HEK293T (cell line): ENCODE measurements at regions of chr1 and their contacts with region 1.

Region 1: DNA sequence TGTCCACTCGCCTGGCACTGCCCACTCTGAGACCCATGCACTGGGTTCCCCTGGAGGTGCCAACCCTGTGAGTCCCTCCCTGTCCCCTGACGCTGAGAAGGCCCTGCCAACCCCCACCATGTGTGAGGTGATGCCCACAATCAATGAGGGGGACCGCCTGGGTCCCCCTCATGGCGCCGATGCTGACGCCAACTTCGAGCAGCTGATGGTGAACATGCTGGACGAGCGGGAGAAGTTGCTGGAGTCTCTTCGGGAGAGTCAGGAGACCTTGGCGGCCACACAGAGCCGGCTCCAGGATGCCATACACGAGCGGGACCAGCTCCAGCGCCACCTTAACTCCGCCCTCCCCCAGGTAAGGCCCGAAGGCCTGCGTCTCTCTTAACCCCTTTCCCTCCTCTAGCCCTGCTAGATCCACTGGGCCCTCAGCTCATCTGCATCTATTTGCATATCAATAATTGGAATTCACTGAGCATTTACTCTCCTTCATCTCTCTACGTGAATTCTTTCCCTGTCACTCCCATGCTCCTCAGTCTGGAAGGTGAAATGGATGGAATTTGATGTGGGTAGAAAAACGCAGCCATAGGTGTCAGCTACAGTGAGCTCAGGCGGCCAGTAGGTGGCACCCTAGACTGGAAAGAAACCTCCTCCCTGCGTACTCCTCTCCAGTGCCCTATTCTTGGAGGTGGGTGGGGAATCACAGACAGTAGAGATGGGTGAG is 12.8 kb downstream of the PPFIA4 start:
- DNase-seq: peak; percentile 84

Region 2: GRCh38 chr1:202938287-202938925 is 100.6 kb before region 1 on chr1:
- CTCF ChIA-PET with region 1: no interaction called
- POLR2A ChIA-PET with region 1: no interaction called
- DNase-seq: no peak

Region 3: GRCh38 chr1:202998836-202999750 is 40.0 kb before region 1 on chr1:
- CTCF ChIA-PET with region 1: no interaction called
- POLR2A ChIA-PET with region 1: no interaction called
- DNase-seq: peak; percentile 37

Region 4: DNA sequence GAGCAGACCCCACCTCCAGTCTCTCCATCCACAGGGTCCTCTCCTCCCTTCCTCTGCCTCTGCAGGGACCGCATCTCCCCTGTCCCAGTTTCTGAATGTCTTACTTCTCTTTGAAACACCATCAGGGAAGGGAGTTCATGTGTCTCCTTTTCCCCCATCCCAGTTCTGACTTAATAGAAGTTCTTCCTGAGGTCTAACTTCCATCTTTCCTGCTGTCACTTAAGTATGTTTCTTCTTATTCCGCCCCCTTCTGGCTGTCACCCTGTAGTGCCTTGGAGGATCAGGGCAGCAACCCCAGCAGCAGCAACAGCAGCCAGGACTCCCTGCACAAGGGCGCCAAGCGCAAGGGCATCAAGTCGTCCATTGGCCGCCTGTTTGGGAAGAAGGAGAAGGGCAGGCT is 17.5 kb after region 1 on chr1:
- CTCF ChIA-PET with region 1: interaction called, 25 read pairs
- POLR2A ChIA-PET with region 1: no interaction called
- DNase-seq: no peak

Region 5: DNA sequence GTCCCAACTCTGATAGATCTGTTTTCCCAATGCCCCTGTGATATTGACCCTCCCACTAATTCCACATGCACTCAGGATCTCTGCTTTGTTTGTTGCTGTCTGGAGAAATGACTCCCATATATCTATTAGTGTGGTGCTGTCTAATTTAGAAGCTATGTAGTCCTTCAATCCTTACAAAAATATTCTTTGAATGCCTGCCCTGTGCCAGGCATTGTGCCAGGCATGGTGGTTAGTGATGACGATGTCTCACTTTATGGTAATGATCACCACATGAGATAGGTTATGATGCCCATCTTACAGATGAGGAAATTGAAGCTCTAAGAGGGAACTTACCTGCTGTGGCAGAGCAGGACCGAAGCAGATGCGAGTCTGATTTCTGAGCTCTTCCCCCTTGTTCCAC is 33.9 kb after region 1 on chr1:
- CTCF ChIA-PET with region 1: no interaction called
- POLR2A ChIA-PET with region 1: no interaction called
- DNase-seq: no peak

Region 6: DNA sequence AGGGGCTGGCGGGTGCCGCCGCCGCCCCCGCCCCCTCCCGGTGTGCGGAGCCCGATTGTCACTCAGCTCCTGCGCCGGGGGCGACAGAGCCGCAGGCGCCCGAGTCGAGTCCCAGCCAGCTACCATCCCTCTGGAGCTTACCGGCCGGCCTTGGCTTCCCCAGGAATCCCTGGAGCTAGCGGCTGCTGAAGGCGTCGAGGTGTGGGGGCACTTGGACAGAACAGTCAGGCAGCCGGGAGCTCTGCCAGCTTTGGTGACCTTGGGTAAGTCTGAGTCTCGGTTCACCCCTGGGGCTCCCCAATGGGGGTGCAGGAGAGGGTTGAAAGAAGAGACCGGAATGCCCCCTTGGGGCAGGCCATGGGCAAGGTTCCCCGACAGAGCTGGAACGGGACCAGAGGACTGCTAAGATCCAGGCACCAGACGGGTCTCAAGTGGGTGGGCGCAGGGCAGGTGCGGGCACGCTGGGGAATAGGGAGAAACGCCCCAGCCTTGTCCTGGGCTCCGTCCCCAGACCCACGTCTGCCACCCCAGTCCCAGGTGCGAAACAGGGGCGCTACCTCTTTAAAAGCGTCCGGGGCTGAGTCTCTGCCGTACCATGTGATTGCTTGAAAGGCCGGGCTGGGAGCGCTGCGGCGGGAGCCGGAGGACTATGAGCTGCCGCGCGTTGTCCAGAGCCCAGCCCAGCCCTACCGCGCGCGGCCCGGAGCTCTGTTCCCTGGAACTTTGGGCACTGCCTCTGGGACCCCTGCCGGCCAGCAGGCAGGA is 88.8 kb after region 1 on chr1 and contains the start of gene ADORA1:
- CTCF ChIA-PET with region 1: interaction called, 19 read pairs
- POLR2A ChIA-PET with region 1: no interaction called
- DNase-seq: peak; percentile 76

Region 7: GRCh38 chr1:203216274-203217138 is 177.5 kb after region 1 on chr1:
- CTCF ChIA-PET with region 1: interaction called, 58 read pairs
- POLR2A ChIA-PET with region 1: no interaction called
- DNase-seq: peak; percentile 83